ENCODE measurements at regions of chr7 and their contacts with region 1.

Region 1: DNA sequence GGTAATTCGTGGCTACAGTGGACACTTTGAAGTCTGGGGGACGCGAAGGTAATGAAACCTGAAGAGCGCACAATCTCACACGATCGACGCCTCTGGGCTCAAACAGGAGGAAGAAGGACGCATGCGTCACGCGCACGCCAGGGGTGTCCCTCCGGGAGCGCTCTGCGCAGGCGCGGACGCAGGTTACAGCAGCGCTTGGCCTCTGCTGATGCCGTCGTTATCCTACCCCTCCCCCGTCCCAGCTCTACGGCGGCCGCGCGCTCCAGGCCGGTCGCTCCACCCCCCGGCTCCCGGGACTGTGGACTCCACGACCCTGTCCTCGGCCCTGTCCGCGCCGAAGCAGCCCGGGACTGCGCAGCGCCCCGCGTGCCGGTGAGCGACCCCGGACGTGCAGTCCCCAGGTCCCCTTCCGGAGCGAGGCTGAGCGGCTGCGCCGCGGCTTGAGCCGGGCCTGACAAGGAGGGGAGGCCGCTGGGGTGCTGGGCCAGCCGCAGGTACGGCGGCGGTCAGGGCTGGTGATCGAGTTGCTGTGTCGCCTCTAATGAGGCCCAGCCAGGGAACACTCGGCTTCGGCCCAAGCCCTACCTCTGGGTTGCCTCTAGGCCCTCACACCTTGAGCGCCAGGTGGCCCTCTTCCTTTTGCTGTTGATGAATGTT is at the start of gene TMEM106B:
- DNase-seq: peak; percentile 99
- H3K4me3 Mint-ChIP-seq: peak within 1 kb of the TSS; percentile 94
- H3K27ac Mint-ChIP-seq: peak within 1 kb of the TSS; percentile 91
- H3K4me1 Mint-ChIP-seq: peaks cover 29% of the 10 kb centered on the region
- H3K27me3 Mint-ChIP-seq: peaks cover 33% of the 10 kb centered on the region
- total RNA-seq, gene TMEM106B: 24.0 and 25.5 TPM in 2 replicates

Region 2: DNA sequence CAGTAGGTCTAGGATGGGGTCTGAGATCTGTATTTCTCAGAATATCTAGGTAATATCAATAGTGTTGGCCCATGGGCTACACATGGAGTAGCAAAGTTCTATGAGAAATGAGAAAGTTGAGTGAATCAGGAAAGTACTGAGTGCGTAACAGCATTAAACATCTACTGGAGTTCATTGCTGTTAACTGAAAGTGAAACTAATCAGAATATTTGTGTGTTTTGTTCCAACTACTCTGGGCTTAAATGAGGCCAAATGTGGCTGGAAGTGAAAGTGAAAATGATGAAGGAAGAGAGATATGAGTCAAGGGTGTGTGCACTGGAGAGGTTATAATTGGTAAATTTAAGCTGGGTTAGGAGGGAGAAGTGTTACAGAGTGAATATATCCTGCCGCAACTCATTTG is 46.4 kb after region 1 on chr7:
- intact Hi-C with region 1: loop called (anchors 1 kb)
- DNase-seq: peak; percentile 88
- H3K4me3 Mint-ChIP-seq: no peak overlapping the region
- H3K27ac Mint-ChIP-seq: no peak overlapping the region
- H3K4me1 Mint-ChIP-seq: peaks cover 8% of the 10 kb centered on the region
- H3K27me3 Mint-ChIP-seq: peaks cover 7% of the 10 kb centered on the region

Region 3: DNA sequence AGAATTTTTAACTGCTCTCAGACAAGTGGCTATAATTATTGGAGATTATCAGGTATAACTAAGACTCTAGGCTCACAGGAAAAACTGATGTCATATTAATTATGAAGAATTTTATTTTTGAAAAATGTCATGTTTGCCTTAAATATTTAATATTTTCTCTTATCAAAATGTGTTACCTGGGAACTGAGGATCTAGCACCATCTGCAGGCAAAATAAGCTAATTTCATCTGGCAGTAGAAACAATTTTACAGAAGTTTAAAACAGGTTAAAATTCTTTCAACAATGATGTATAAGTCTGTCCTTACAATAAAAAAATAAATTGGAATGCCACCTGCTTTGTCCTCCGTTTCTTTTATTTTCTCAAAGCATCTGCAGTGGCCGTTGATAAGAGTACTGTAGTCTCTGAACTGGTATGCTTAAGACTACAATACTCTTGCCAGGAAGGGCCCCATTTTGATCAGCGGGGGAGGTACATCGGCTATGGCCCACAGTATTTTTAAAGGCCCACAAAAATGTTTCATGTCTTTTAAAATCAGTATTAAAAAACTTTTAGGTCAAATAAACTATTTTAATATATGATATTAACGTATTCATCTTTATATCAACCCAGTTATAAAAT is 111.2 kb after region 1 on chr7:
- intact Hi-C with region 1: loop called (anchors 2 kb)
- DNase-seq: peak; percentile 63
- H3K4me3 Mint-ChIP-seq: no peak overlapping the region
- H3K27ac Mint-ChIP-seq: no peak overlapping the region
- H3K4me1 Mint-ChIP-seq: no peaks in the 10 kb centered on the region
- H3K27me3 Mint-ChIP-seq: no peaks in the 10 kb centered on the region

Region 4: GRCh38 chr7:12403287-12404181 is 192.4 kb after region 1 on chr7 and contains the start of gene VWDE:
- intact Hi-C with region 1: loop called (anchors 2 kb)
- DNase-seq: peak; percentile 87
- H3K4me3 Mint-ChIP-seq: peak within 1 kb of the TSS; percentile 93
- H3K27ac Mint-ChIP-seq: peak within 1 kb of the TSS; percentile 80
- H3K4me1 Mint-ChIP-seq: peaks cover 18% of the 10 kb centered on the region
- H3K27me3 Mint-ChIP-seq: peaks cover 28% of the 10 kb centered on the region
- total RNA-seq, gene VWDE: 1.8 and 1.9 TPM in 2 replicates

Region 5: DNA sequence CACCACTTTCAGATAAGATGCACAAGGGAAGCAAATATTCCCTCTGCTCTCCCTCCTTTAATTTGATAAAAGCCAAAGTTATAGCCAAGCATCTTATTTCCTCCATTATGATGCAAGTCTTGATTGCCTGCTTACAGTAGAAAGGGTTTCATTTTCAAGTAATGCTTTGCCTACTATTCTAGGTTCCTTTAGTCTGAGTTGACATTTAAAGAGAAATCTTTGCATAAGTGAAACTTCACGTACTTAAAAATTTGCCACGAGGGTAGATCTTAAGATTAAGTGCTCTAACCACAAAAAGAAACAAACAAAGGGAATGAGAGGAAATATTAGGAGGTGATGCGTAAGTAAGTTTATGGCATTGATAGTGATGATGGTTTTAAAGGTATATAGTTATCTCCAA is 270.5 kb after region 1 on chr7:
- intact Hi-C with region 1: loop called (anchors 10 kb)
- DNase-seq: no peak
- H3K4me3 Mint-ChIP-seq: peak overlapping the region; percentile 41
- H3K27ac Mint-ChIP-seq: no peak overlapping the region
- H3K4me1 Mint-ChIP-seq: peaks cover 8% of the 10 kb centered on the region
- H3K27me3 Mint-ChIP-seq: peaks cover 2% of the 10 kb centered on the region

Measured in activated CD4-positive, alpha-beta T cell treated with anti-CD3 and anti-CD28 coated beads, Interleukin-2, amount 10 ng/mL, durations not matched to agents 24 days and 14 days (primary cell).